Endothelial cell of umbilical vein (primary cell): ENCODE measurements at regions of chr7 and their contacts with region 1.

Region 1: GRCh38 chr7:142782922-142783900 is 12.4 kb downstream of the PRSS2 start:
- DNase-seq: peak; percentile 88
- H3K4me3 ChIP-seq: peak overlapping the region; percentile 32 to 55 (median 49)
- H3K27ac ChIP-seq: no peak overlapping the region
- H3K4me1 ChIP-seq: peaks cover 3% of the 10 kb centered on the region
- H3K27me3 ChIP-seq: no peaks in the 10 kb centered on the region
- CTCF ChIP-seq: peak; percentile 92 to 98
- POLR2A ChIP-seq: no peak

Region 2: DNA sequence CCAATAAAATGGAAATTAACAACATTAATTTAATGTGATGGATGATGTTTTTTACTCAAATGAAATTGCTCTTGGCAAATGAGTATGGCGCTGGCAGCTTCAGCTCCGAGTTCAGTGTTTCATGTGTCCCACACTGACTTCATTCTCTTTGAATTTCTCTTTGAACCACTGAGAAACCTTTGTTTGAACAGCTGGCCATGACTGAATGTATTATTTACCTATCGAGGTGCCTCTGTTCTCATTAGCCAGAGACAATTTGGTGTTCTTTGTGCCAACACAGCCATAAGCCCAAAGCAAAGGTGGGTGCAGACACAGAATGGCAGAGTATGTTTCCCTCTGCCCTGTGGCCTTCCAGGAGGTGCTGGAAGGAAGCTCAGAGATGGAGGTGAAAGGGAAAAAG is 1667.2 kb before region 1 on chr7:
- CTCF ChIA-PET with region 1: no interaction called
- POLR2A ChIA-PET with region 1: no interaction called
- dilution Hi-C with region 1: no loop called
- intact Hi-C with region 1: no loop called
- DNase-seq: no peak
- H3K4me3 ChIP-seq: no peak overlapping the region
- H3K27ac ChIP-seq: no peak overlapping the region
- H3K4me1 ChIP-seq: no peaks in the 10 kb centered on the region
- H3K27me3 ChIP-seq: no peaks in the 10 kb centered on the region
- CTCF ChIP-seq: no peak
- POLR2A ChIP-seq: no peak

Region 3: DNA sequence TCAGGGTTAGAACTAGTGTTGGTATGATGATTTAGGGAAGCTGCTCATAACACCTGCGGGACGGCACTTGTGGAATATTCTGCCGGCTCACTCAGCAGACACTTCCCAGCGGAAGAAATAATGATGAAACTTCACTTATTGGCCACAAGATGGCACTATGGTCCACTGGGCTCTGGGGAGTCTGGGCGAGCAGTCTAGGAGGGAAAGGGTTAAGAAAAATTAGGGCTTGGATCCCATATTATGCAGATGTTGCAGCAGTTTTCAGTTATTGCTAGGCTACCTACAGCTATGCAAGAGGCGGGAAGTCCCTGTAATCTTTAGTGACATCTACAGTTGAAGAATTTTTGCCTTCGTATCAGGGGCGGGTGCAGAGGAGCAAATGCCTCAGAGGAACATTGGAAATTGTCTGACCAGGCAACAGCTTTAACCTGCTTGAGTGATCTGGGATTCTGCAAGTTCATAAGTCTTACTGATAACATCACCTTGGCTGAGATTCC is 286.6 kb before region 1 on chr7:
- CTCF ChIA-PET with region 1: interaction called, 12 read pairs
- POLR2A ChIA-PET with region 1: no interaction called
- dilution Hi-C with region 1: no loop called
- intact Hi-C with region 1: no loop called
- DNase-seq: peak; percentile 41
- H3K4me3 ChIP-seq: no peak overlapping the region
- H3K27ac ChIP-seq: no peak overlapping the region
- H3K4me1 ChIP-seq: no peaks in the 10 kb centered on the region
- H3K27me3 ChIP-seq: peaks cover 14 to 27% of the 10 kb centered on the region in 2 experiments
- CTCF ChIP-seq: peak; percentile 65 to 71
- POLR2A ChIP-seq: no peak

Region 4: GRCh38 chr7:142587578-142588191 is 195.5 kb before region 1 on chr7:
- CTCF ChIA-PET with region 1: interaction called, 11 read pairs
- POLR2A ChIA-PET with region 1: no interaction called
- dilution Hi-C with region 1: no loop called
- intact Hi-C with region 1: no loop called
- DNase-seq: peak; percentile 66
- H3K4me3 ChIP-seq: no peak overlapping the region
- H3K27ac ChIP-seq: no peak overlapping the region
- H3K4me1 ChIP-seq: peaks cover 10% of the 10 kb centered on the region
- H3K27me3 ChIP-seq: no peaks in the 10 kb centered on the region
- CTCF ChIP-seq: peak; percentile 63 to 82
- POLR2A ChIP-seq: no peak

Region 5: DNA sequence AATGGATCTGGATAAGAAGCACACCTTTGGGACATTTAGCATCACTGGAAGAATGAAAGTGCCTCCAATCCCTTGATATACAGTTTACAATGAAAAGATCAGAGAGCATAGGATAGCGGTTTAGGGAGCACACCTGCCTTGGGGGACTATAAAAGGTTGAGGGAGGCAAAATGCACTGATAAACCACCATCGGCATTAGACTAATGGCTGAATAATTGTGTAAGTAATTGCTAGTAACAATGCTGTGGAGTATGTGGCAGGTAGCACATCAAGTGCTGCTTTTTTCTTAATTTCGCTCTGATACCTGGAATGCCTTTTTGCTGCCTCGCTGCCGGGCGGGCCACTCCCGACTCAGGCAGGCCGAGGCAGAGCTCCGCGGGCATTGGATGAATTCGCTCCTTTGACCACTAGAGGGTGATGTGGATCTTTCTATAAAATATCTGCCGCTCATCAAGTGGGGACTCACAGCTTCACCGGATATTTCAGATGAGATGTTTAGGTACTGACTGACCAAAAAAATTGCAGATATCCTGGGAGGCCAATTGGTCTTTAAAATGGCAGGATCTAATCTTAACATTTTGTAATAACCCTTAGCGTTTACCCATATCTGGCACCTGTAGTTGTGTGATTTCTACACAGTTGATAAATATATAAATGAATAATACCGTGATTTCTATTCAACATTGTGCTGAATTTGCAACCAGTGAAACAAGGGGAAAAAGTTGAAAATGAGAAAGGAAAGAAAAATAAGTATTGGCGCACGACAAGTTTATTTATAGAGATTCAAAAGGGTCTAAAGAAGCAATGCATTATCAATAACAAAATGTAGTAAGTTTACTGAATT is 150.7 kb before region 1 on chr7:
- CTCF ChIA-PET with region 1: interaction called, 141 read pairs
- POLR2A ChIA-PET with region 1: no interaction called
- dilution Hi-C with region 1: no loop called
- intact Hi-C with region 1: loop called (anchors 1 kb)
- DNase-seq: peak; percentile 74
- H3K4me3 ChIP-seq: no peak overlapping the region
- H3K27ac ChIP-seq: no peak overlapping the region
- H3K4me1 ChIP-seq: no peaks in the 10 kb centered on the region
- H3K27me3 ChIP-seq: peaks cover 1 to 3% of the 10 kb centered on the region in 2 experiments
- CTCF ChIP-seq: peak; percentile 69 to 73
- POLR2A ChIP-seq: no peak

Region 6: GRCh38 chr7:142689439-142690120 is 93.6 kb before region 1 on chr7:
- CTCF ChIA-PET with region 1: interaction called, 93 read pairs
- POLR2A ChIA-PET with region 1: no interaction called
- dilution Hi-C with region 1: no loop called
- intact Hi-C with region 1: loop called (anchors 1 kb)
- DNase-seq: peak; percentile 23
- H3K4me3 ChIP-seq: no peak overlapping the region
- H3K27ac ChIP-seq: no peak overlapping the region
- H3K4me1 ChIP-seq: no peaks in the 10 kb centered on the region
- H3K27me3 ChIP-seq: peaks cover 6 to 13% of the 10 kb centered on the region in 2 experiments
- CTCF ChIP-seq: no peak
- POLR2A ChIP-seq: no peak

Region 7: DNA sequence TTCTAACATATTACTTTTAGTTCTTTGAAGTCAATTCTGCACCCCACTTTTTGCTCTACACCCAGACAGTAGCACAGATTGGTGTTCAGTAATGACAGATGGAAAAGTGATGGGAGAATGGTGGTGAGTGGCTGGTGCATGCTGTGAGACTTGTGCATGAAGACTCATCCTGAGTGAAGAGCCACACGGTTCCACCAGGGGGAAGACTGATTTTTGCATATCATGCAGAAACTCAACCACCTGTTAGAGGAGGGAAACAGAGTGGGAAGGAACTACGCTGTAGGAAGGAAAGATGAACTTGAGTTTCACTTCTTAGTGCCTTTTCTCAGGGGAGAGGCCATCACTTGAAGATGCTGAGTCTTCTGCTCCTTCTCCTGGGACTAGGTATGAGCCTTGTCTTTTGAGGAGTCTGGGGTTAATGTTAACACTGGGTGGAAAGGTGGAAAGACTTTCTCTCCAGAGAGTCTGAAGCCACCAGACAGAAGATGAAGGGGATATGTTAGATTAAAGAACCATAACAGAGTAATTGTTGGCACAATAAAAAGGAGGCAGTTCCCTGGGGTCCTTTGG is 43.2 kb before region 1 on chr7:
- CTCF ChIA-PET with region 1: interaction called, 29 read pairs
- POLR2A ChIA-PET with region 1: no interaction called
- dilution Hi-C with region 1: no loop called
- intact Hi-C with region 1: loop called (anchors 1 kb)
- DNase-seq: no peak
- H3K4me3 ChIP-seq: no peak overlapping the region
- H3K27ac ChIP-seq: no peak overlapping the region
- H3K4me1 ChIP-seq: no peaks in the 10 kb centered on the region
- H3K27me3 ChIP-seq: peaks cover 6 to 12% of the 10 kb centered on the region in 2 experiments
- CTCF ChIP-seq: no peak
- POLR2A ChIP-seq: no peak

Region 8: DNA sequence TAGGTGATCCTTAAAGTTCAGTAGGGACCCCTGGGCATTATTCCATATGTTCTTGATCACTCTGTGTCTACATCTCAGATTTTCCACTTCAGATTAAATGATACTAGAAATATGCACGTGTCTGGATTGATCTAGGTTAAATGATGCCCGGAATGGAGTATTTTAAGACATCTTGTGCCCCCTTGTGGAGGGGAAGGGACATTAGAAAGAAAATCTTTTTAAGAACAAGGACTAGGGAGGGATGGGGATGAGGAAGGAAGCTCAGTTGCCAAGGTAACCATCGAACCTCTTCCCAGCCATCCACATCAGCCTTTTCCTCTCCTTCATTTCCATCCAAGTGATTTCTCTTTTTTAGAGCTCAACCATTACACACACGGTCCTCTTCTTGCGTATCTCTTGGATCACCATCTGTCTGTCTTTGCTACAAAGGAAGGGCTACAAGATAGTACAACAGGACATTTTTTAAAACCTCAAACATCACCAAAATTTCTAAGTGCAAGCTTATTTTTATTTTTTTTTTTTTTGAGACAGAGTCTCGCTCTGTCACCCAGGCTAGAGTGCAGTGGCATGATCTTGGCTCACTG is 28.0 kb after region 1 on chr7:
- CTCF ChIA-PET with region 1: interaction called, 425 read pairs
- POLR2A ChIA-PET with region 1: interaction called, 3 read pairs
- dilution Hi-C with region 1: no loop called
- intact Hi-C with region 1: loop called (anchors 1 kb)
- DNase-seq: peak; percentile 63
- H3K4me3 ChIP-seq: no peak overlapping the region
- H3K27ac ChIP-seq: no peak overlapping the region
- H3K4me1 ChIP-seq: peaks cover 50% of the 10 kb centered on the region
- H3K27me3 ChIP-seq: no peaks in the 10 kb centered on the region
- CTCF ChIP-seq: peak; percentile 39 to 59
- POLR2A ChIP-seq: no peak

Region 9: DNA sequence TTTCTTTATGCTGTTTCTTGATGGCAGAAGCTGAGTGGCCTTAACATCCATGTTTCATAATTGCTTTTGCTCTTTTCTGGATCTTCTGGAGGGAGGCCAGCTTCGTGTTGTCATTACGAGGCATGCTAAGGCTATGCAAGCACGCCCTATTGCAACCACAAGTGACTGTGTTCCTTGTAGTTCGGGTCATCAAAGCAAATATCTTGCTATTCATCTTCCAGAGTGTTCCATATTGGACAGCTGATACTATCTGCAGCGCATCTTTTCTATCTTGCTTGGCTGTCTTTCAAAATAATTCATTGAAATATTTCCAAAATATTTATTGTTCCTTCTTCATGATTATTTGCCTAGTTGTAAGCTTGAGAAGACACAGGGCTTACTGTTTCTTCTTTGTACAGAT is 76.6 kb after region 1 on chr7:
- CTCF ChIA-PET with region 1: no interaction called
- POLR2A ChIA-PET with region 1: no interaction called
- dilution Hi-C with region 1: no loop called
- intact Hi-C with region 1: no loop called
- DNase-seq: no peak
- H3K4me3 ChIP-seq: no peak overlapping the region
- H3K27ac ChIP-seq: no peak overlapping the region
- H3K4me1 ChIP-seq: peaks cover 3% of the 10 kb centered on the region
- H3K27me3 ChIP-seq: peaks cover 4 to 5% of the 10 kb centered on the region in 2 experiments
- CTCF ChIP-seq: no peak
- POLR2A ChIP-seq: no peak

Region 10: DNA sequence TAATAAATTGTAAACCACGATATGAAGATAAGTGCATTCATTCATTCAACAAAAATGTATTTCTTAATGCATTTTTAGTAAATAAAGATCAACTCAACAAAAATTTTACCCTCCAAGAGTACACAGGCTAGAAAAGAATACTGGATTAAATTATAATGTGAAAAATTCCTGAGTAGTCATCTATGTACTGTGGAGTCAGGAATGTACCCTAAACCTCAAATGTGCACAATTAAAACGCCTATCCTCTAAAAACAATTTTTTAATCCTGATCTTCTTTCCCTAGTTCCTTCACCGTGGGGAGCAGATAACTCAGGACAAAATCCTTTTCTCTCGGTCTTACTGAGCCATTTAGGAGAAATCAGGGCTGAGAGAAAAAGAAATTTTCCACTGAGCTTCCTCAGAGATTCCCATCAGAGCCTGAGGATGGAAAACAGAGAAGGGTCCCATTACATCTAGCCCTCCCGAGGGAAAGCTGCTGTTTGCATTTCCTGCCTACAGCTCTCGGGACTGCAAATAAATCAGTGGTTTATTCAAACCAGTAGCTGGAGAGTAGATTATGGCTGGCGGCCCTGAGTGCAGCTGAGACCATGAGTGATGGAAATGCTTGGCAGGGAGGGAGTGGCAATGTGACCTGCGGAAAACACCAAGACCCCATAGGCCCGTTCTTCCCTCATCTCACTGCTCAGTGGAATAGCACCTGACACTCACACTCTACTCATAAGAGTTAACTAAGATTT is 446.0 kb after region 1 on chr7:
- CTCF ChIA-PET with region 1: no interaction called
- POLR2A ChIA-PET with region 1: no interaction called
- dilution Hi-C with region 1: no loop called
- intact Hi-C with region 1: no loop called
- DNase-seq: no peak
- H3K4me3 ChIP-seq: no peak overlapping the region
- H3K27ac ChIP-seq: no peak overlapping the region
- H3K4me1 ChIP-seq: no peaks in the 10 kb centered on the region
- H3K27me3 ChIP-seq: peaks cover 13 to 18% of the 10 kb centered on the region in 2 experiments
- CTCF ChIP-seq: no peak
- POLR2A ChIP-seq: no peak